Heart right ventricle (tissue), 16 donors: ENCODE measurements at regions of chr14 and their contacts with region 1.

Region 1: DNA sequence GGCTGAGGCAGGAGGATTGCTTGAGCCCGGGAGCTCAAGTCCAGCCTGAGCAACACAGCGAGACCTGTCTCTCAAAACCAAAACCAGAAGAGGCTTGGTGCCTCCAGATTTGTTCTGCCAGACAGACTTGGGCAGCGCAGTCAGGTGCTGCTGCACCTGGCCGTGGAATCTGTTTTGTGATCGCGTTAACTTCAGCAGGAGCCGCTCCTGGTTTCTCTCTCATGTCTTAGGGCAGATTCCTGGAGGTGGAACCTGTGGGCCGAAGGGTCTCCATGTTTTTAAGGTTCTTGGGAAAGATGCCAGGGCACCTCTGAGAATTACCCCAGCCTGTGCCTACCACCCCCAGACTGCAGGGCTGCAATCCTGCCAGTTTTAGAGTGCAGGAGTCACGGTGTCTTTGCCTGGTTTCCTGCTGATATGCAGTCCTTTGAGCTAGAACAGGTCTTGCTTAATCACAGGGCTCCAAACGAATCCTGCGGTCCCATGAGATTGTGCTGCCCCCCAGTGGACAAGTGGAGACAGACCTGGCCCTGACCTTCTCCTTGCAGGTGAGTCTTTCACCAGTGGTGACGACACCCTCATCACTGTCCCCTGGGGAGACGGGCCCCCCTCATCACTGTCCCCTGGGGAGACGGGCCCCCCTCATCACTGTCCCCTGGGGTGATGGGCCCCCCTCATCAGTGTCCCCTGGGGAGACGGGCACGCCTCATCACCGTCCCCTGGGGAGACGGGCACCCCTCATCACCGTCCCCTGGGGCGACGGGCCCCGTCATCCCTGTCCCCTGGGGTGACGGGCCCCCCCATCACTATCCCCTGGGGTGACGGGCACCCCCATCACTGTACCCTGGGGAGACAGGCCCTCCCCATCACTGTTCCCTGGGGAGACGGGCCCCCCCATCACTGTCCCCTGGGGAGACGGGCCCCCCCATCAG is 37.6 kb downstream of the PACS2 start:
- DNase-seq: peak; percentile 78 to 84
- ATAC-seq: peak; percentile 79 to 94 (median 89)
- H3K4me3 ChIP-seq: no peak overlapping the region
- H3K27ac ChIP-seq: peak overlapping the region in 5 of 10 donors; percentile 4 to 58 (median 30)
- H3K4me1 ChIP-seq: peaks cover 0 to 14% (median 6%) of the 10 kb centered on the region in 9 donors
- H3K27me3 ChIP-seq: no peaks in the 10 kb centered on the region
- CTCF ChIP-seq: peak; percentile 74 to 89 (median 86)

Region 2: GRCh38 chr14:104773505-104774453 is 578.4 kb before region 1 on chr14:
- intact Hi-C with region 1: no loop called
- DNase-seq: peak in 1 of 2 donors; percentile 11
- ATAC-seq: peak in 1 of 8 donors; percentile 14
- H3K4me3 ChIP-seq: no peak overlapping the region
- H3K27ac ChIP-seq: no peak overlapping the region
- H3K4me1 ChIP-seq: peaks cover 0 to 7% (median 4%) of the 10 kb centered on the region in 9 donors
- H3K27me3 ChIP-seq: no peaks in the 10 kb centered on the region
- CTCF ChIP-seq: peak in 1 of 9 donors; percentile 7

Region 3: GRCh38 chr14:105267820-105268548 is 84.2 kb before region 1 on chr14:
- intact Hi-C with region 1: loop called in 1 of 10 experiments (anchors 10 kb)
- DNase-seq: no peak
- ATAC-seq: peak in 7 of 8 donors; percentile 48 to 82 (median 69)
- H3K4me3 ChIP-seq: no peak overlapping the region
- H3K27ac ChIP-seq: no peak overlapping the region
- H3K4me1 ChIP-seq: peaks cover 0 to 13% (median 0%) of the 10 kb centered on the region in 9 donors
- H3K27me3 ChIP-seq: no peaks in the 10 kb centered on the region
- CTCF ChIP-seq: peak in 4 of 9 donors; percentile 19 to 39 (median 30)

Region 4: DNA sequence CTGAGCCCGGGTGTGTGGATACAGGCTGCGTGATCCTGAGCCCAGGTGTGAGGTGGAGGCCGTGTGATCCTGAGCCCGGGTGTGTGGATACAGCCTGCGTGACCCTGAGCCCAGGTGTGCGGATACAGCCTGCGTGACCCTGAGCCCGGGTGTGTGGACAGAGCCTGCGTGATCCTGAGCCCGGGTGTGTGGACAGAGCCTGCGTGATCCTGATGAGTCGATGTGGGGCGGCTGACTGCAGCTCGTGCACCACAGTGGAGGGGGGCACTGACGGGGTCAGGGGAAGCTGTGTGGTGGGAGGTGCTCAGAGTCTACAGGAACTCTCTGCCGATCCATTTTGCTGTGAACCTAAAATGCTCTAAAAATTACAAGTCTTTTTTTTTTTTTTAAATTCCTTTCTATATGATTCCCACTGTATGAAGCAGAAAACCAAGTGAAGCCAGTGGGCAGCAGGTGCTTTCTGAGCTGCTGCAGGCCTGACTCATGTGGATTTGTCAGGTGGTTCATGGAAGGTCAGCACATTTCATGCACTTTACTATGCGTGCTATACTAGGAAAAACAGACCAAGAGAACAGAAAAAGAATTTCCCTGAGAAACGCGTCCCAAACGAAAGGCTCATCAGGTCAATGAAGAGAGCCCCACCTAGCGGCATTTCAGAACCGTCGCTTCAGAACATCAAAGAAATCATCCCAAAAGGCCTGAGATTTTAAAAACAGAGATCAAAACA is 70.7 kb before region 1 on chr14:
- intact Hi-C with region 1: loop called in 1 of 10 experiments (anchors 5 kb)
- DNase-seq: no peak
- ATAC-seq: peak in 2 of 8 donors; percentile 13 to 36
- H3K4me3 ChIP-seq: no peak overlapping the region
- H3K27ac ChIP-seq: no peak overlapping the region
- H3K4me1 ChIP-seq: peaks cover 0 to 19% (median 14%) of the 10 kb centered on the region in 9 donors
- H3K27me3 ChIP-seq: no peaks in the 10 kb centered on the region
- CTCF ChIP-seq: peak; percentile 13 to 74 (median 59)

Region 5: GRCh38 chr14:105294142-105294597 is 58.0 kb before region 1 on chr14:
- intact Hi-C with region 1: loop called in 1 of 10 experiments (anchors 5 kb)
- DNase-seq: peak; percentile 74 to 83
- ATAC-seq: peak; percentile 89 to 99 (median 96)
- H3K4me3 ChIP-seq: no peak overlapping the region
- H3K27ac ChIP-seq: peak overlapping the region in 9 of 10 donors; percentile 59 to 85 (median 69)
- H3K4me1 ChIP-seq: peaks cover 10 to 58% (median 34%) of the 10 kb centered on the region in 9 donors
- H3K27me3 ChIP-seq: no peaks in the 10 kb centered on the region
- CTCF ChIP-seq: no peak

Region 6: GRCh38 chr14:105314287-105315200 is 37.6 kb before region 1 on chr14 and contains the start of gene PACS2:
- intact Hi-C with region 1: loop called in 2 of 10 experiments (anchors 5 kb)
- DNase-seq: peak; percentile 64 to 84
- ATAC-seq: peak; percentile 82 to 93 (median 88)
- H3K4me3 ChIP-seq: peak within 1 kb of the TSS; percentile 60 to 99 (median 78)
- H3K27ac ChIP-seq: peak within 1 kb of the TSS; percentile 78 to 96 (median 94)
- H3K4me1 ChIP-seq: peaks cover 9 to 43% (median 35%) of the 10 kb centered on the region in 9 donors
- H3K27me3 ChIP-seq: no peaks in the 10 kb centered on the region
- CTCF ChIP-seq: no peak
- total RNA-seq, gene PACS2: 41.8 to 78.9 (median 54.6) TPM

Region 7: DNA sequence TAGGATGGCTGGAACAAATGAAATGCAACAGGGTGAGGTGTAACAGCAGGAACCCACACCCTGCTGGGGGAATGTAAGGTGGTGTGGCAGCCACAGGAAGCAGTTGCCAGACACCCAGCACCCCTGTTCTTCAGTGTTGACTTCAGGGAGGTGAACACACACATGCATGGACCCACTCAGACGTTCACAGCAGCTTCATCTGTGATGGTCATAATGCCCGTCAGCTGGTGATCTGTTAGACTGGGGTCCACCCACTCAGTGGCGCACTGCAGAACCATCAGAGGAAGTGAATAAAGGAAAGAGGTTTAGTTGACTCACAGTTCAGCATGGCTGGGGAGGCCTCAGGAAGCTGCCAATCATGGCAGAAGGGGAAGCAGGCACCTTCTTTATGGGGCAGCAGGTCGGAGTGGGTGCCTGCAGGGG is 23.5 kb after region 1 on chr14:
- intact Hi-C with region 1: no loop called
- DNase-seq: no peak
- ATAC-seq: no peak
- H3K4me3 ChIP-seq: no peak overlapping the region
- H3K27ac ChIP-seq: no peak overlapping the region
- H3K4me1 ChIP-seq: peaks cover 0 to 11% (median 0%) of the 10 kb centered on the region in 9 donors
- H3K27me3 ChIP-seq: no peaks in the 10 kb centered on the region
- CTCF ChIP-seq: no peak